ENCODE measurements at regions of chr16 and their contacts with region 1.

Region 1: GRCh38 chr16:23670137-23670776 is 8.4 kb upstream of the PLK1 start:
- DNase-seq: peak; percentile 47
- H3K4me3 Mint-ChIP-seq: no peak overlapping the region
- H3K27ac Mint-ChIP-seq: peak overlapping the region; percentile 36
- H3K4me1 Mint-ChIP-seq: peaks cover 23% of the 10 kb centered on the region
- H3K27me3 Mint-ChIP-seq: no peaks in the 10 kb centered on the region

Region 2: DNA sequence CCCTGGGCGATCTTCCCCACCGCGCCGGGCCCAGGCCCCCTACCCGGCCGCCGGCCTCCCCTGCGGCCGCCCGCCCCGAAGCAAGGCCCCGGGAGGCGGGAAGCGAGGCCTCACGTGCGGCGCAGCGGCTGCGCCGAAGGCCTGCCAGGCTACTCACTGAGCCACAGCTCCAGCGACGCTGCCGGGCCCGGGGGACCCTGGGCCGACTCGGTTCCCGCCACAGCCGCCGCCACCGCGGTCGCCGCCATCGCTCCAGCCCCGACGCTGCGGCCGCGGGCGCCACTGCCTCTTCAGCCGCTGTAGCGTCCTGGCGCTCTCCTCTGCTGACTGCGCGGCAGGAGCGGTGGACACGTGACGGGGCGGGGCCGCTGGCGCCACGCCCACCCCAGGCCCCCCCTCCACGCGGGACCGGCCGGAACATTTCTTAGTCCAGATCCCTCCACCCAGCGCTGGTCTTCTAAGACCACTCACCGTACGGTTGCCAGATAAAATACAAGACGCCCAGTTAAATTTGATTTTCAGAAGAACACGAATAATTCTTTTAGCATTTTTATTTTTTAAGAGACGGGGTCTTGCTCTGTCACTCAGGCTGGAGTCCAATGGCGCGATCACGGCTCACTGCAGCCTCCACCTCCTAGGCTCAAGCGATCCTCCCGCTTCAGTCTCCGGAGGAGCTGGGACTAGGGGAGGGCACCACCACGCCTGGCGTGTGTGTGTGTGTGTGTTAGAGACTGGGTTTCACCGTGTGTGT is 159.9 kb before region 1 on chr16 and contains the start of gene GGA2:
- intact Hi-C with region 1: loop called (anchors 5 kb)
- DNase-seq: peak; percentile 73
- H3K4me3 Mint-ChIP-seq: peak within 1 kb of the TSS; percentile 91
- H3K27ac Mint-ChIP-seq: peak within 1 kb of the TSS; percentile 90
- H3K4me1 Mint-ChIP-seq: peaks cover 54% of the 10 kb centered on the region
- H3K27me3 Mint-ChIP-seq: no peaks in the 10 kb centered on the region
- total RNA-seq, gene GGA2: 108 and 110 TPM in 2 replicates

Region 3: DNA sequence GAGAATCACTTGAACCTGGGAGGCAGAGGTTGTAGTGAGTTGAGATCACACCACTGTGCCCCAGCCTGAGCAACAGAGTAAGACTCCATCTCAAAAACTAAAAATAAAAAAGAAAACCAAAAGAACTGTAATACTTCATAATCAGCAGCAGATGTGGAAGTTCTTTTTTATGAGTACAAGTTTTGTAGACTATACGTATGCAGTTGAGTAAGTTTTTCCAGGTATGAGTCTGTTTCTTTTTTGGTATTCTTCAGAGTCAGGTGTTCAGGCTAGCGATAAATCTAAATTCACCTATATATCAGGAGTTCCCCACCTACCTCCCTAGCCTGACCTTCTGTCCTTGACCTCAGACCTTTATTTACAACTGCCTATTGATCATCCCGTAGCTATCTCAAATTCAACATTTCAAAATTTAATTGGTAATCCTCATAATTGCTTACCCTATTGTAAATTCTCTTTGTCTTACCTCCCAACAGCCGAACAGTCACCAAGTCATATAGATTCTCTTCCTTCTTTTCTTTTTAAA is 18.3 kb before region 1 on chr16:
- intact Hi-C with region 1: loop called (anchors 1 kb)
- DNase-seq: no peak
- H3K4me3 Mint-ChIP-seq: no peak overlapping the region
- H3K27ac Mint-ChIP-seq: peak overlapping the region; percentile 53
- H3K4me1 Mint-ChIP-seq: peaks cover 21% of the 10 kb centered on the region
- H3K27me3 Mint-ChIP-seq: no peaks in the 10 kb centered on the region